PC-9 (cell line): ENCODE measurements at regions of chr17 and their contacts with region 1.

Region 1: DNA sequence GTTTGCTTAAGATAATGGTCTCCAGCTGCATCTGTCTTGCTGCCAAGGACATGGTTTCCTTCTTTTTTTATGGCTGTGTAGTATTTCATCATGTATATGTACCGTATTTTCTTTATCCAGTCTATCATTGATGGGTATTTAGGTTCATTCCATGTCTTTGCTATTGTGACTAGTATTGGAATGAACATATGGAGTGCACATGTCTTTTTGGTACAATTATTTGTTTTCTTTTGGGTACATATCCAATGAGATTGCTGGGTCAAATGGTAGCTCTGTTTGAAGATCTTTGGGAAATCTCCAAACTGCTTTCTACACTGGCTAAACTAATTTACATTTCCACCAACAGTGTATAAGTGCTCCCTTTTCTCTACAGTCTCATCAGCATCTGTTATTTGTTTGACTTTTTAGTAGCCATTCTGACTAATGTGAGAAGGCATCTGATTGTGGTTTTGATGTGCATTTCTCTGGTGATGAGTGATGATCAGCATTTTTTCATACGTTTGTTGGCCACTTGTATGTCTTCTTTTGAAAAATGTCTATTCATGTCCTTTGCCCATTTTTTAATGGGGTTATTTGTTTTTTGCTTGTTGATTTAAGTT is 66.2 kb downstream of the TNFRSF13B start:
- DNase-seq: peak in 1 of 2 experiments; percentile 90
- H3K4me3 ChIP-seq: no peak overlapping the region
- H3K27ac ChIP-seq: peak overlapping the region; percentile 68
- H3K4me1 ChIP-seq: peaks cover 24% of the 10 kb centered on the region
- H3K27me3 ChIP-seq: no peaks in the 10 kb centered on the region
- CTCF ChIP-seq: no peak

Region 2: DNA sequence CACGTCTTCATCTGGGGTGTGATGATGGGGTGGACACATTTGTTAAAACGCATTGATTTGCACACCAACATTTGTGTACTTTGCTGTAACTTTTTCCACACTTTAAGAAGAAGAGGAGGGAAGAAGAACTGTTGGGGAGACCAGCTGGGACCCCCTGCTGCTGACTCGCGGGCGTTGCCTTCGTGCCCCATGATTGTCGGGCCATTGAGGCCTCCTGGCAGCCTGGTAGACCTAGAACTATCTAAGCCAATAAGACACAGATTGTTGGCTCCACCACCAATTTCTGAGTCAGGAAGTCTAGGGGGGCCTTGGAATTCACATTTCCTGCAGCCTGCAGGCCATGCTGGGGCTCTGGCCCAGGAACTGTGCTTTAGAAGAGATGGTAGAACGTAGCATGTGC is 39.3 kb before region 1 on chr17:
- CTCF ChIA-PET with region 1: interaction called, 3 read pairs
- POLR2A ChIA-PET with region 1: no interaction called
- intact Hi-C with region 1: loop called (anchors 2 kb)
- DNase-seq: no peak
- H3K4me3 ChIP-seq: no peak overlapping the region
- H3K27ac ChIP-seq: peak overlapping the region; percentile 90
- H3K4me1 ChIP-seq: peaks cover 45% of the 10 kb centered on the region
- H3K27me3 ChIP-seq: no peaks in the 10 kb centered on the region
- CTCF ChIP-seq: no peak

Region 3: GRCh38 chr17:17206124-17206912 is 300.6 kb after region 1 on chr17 and contains the start of gene PLD6:
- CTCF ChIA-PET with region 1: no interaction called
- POLR2A ChIA-PET with region 1: interaction called, 12 read pairs
- intact Hi-C with region 1: no loop called
- DNase-seq: peak; percentile 61 to 91
- H3K4me3 ChIP-seq: peak within 1 kb of the TSS; percentile 91
- H3K27ac ChIP-seq: peak within 1 kb of the TSS; percentile 8
- H3K4me1 ChIP-seq: peaks cover 14% of the 10 kb centered on the region
- H3K27me3 ChIP-seq: no peaks in the 10 kb centered on the region
- CTCF ChIP-seq: no peak
- total RNA-seq, gene PLD6: 4.1 and 5.0 TPM in 2 replicates